Vagina (tissue), 2 donors: ENCODE measurements at regions of chr1 and their contacts with region 1.

Region 1: DNA sequence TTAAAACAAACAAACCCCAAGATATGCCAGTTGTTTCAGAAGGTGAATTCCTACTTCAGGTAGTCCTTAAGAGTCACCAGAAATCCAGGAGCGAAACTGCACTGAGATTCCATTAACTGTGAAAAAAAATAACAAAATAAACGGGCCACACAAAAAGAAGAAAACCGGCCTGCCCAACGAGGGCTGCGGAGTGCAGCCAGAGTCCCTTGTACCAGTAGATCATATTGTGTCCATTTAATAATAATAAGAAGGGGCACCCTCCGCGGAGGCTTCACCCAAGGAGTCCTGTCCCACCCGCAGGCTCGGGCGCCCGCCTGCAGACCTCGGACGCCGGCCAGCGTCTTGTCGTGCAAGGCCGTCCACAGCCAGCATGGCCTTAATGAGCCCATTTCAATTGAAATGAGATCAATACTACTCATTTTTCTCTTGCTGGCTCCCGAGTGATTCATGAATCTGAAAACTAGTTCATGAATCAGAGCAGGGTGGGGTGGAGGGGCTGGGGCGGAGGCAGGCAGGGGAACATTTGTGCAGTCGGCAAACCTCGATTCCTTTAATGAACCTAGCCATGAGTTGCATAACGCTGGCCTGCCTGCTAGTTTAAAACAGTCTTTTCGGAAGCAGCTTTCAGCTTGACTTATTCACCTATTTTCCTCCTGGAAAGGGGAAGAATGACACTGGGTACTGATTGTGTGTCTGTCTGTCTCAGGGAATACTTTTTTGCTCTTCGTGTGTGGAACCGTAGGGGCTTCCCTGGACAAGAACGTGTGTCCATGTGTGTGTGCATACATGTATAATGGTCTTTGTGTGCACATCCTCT is 113.1 kb upstream of the IRF2BP2 start:
- DNase-seq: peak in 1 of 2 donors; percentile 97
- H3K4me3 ChIP-seq: peak overlapping the region; percentile 4 to 9
- H3K27ac ChIP-seq: peak overlapping the region; percentile 91
- H3K4me1 ChIP-seq: peaks cover 85% of the 10 kb centered on the region
- H3K27me3 ChIP-seq: no peaks in the 10 kb centered on the region
- CTCF ChIP-seq: no peak
- POLR2A ChIP-seq: no peak

Region 2: GRCh38 chr1:234361102-234361603 is 362.0 kb before region 1 on chr1:
- intact Hi-C with region 1: no loop called
- DNase-seq: no peak
- H3K4me3 ChIP-seq: no peak overlapping the region
- H3K27ac ChIP-seq: no peak overlapping the region
- H3K4me1 ChIP-seq: no peaks in the 10 kb centered on the region
- H3K27me3 ChIP-seq: no peaks in the 10 kb centered on the region
- CTCF ChIP-seq: no peak
- POLR2A ChIP-seq: no peak

Region 3: GRCh38 chr1:234499119-234499942 is 223.8 kb before region 1 on chr1:
- intact Hi-C with region 1: loop called (anchors 2 kb)
- DNase-seq: peak in 1 of 2 donors; percentile 97
- H3K4me3 ChIP-seq: peak overlapping the region; percentile 22
- H3K27ac ChIP-seq: peak overlapping the region; percentile 90
- H3K4me1 ChIP-seq: peaks cover 25% of the 10 kb centered on the region
- H3K27me3 ChIP-seq: no peaks in the 10 kb centered on the region
- CTCF ChIP-seq: peak; percentile 81 to 95 (median 93)
- POLR2A ChIP-seq: no peak

Region 4: GRCh38 chr1:234610348-234611152 is 112.6 kb before region 1 on chr1:
- intact Hi-C with region 1: loop called (anchors 2 kb)
- DNase-seq: no peak
- H3K4me3 ChIP-seq: peak overlapping the region; percentile 56 to 62
- H3K27ac ChIP-seq: peak overlapping the region; percentile 99
- H3K4me1 ChIP-seq: peaks cover 46% of the 10 kb centered on the region
- H3K27me3 ChIP-seq: no peaks in the 10 kb centered on the region
- CTCF ChIP-seq: no peak
- POLR2A ChIP-seq: peak in 1 of 2 donors; percentile 94

Region 5: GRCh38 chr1:234881893-234882771 is 159.0 kb after region 1 on chr1:
- intact Hi-C with region 1: loop called (anchors 10 kb)
- DNase-seq: no peak
- H3K4me3 ChIP-seq: no peak overlapping the region
- H3K27ac ChIP-seq: no peak overlapping the region
- H3K4me1 ChIP-seq: peaks cover 28% of the 10 kb centered on the region
- H3K27me3 ChIP-seq: no peaks in the 10 kb centered on the region
- CTCF ChIP-seq: no peak
- POLR2A ChIP-seq: no peak

Region 6: GRCh38 chr1:235077571-235078479 is 354.7 kb after region 1 on chr1:
- intact Hi-C with region 1: loop called (anchors 5 kb)
- DNase-seq: no peak
- H3K4me3 ChIP-seq: no peak overlapping the region
- H3K27ac ChIP-seq: peak overlapping the region; percentile 55
- H3K4me1 ChIP-seq: peaks cover 91% of the 10 kb centered on the region
- H3K27me3 ChIP-seq: no peaks in the 10 kb centered on the region
- CTCF ChIP-seq: no peak
- POLR2A ChIP-seq: no peak